ENCODE measurements at regions of chr11 and their contacts with region 1.

Region 1: GRCh38 chr11:5123802-5124521 is 14.2 kb downstream of the OR52A5 start:
- DNase-seq: peak; percentile 80
- H3K4me3 ChIP-seq: no peak overlapping the region
- H3K27ac ChIP-seq: no peak overlapping the region
- H3K4me1 ChIP-seq: no peaks in the 10 kb centered on the region
- H3K27me3 ChIP-seq: no peaks in the 10 kb centered on the region
- CTCF ChIP-seq: peak; percentile 75

Region 2: GRCh38 chr11:4626207-4627099 is 497.5 kb before region 1 on chr11:
- CTCF ChIA-PET with region 1: no interaction called
- POLR2A ChIA-PET with region 1: no interaction called
- intact Hi-C with region 1: loop called (anchors 5 kb)
- DNase-seq: peak; percentile 78
- H3K4me3 ChIP-seq: no peak overlapping the region
- H3K27ac ChIP-seq: no peak overlapping the region
- H3K4me1 ChIP-seq: no peaks in the 10 kb centered on the region
- H3K27me3 ChIP-seq: no peaks in the 10 kb centered on the region
- CTCF ChIP-seq: peak; percentile 73

Region 3: GRCh38 chr11:5059391-5059790 is 64.6 kb before region 1 on chr11 and contains the start of gene OR52E2:
- CTCF ChIA-PET with region 1: no interaction called
- POLR2A ChIA-PET with region 1: no interaction called
- intact Hi-C with region 1: no loop called
- DNase-seq: no peak
- H3K4me3 ChIP-seq: no peak within 1 kb of the TSS
- H3K27ac ChIP-seq: no peak within 1 kb of the TSS
- H3K4me1 ChIP-seq: no peaks in the 10 kb centered on the region
- H3K27me3 ChIP-seq: no peaks in the 10 kb centered on the region
- CTCF ChIP-seq: no peak
- total RNA-seq, gene OR52E2: not detected in 2 replicates

Region 4: GRCh38 chr11:5291207-5291838 is 167.4 kb after region 1 on chr11:
- CTCF ChIA-PET with region 1: no interaction called
- POLR2A ChIA-PET with region 1: no interaction called
- intact Hi-C with region 1: loop called (anchors 5 kb)
- DNase-seq: peak; percentile 10
- H3K4me3 ChIP-seq: no peak overlapping the region
- H3K27ac ChIP-seq: no peak overlapping the region
- H3K4me1 ChIP-seq: no peaks in the 10 kb centered on the region
- H3K27me3 ChIP-seq: no peaks in the 10 kb centered on the region
- CTCF ChIP-seq: peak; percentile 43

Region 5: DNA sequence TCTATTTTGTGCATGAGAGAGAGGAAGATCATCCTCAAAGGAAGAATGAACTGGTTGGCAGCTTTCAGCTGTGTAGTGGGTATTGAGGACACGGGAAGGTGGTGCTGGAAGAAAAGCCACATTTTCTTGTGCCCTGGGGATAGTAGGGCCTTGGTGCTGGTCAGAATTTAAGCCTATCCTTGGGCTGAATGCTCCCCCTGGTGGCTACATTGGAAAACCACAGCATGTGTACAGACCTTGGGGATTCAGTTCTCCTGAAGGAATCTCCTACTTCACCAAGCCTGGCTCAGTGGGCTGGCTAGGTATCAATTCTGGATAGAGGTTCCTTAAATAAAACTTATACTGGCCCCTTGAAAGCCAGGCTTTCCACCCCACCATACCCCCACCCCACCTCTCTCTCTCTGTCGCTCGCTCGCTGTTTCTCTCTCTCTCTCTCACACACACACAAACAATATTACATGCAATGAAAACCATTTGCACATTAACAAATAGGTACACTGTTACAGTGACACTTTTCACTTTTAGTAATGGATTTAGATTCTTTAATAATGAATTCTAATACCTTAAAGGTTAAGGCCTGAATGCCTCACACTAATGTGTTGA is 256.9 kb after region 1 on chr11:
- CTCF ChIA-PET with region 1: no interaction called
- POLR2A ChIA-PET with region 1: no interaction called
- intact Hi-C with region 1: loop called (anchors 1 kb)
- DNase-seq: peak; percentile 61
- H3K4me3 ChIP-seq: no peak overlapping the region
- H3K27ac ChIP-seq: no peak overlapping the region
- H3K4me1 ChIP-seq: no peaks in the 10 kb centered on the region
- H3K27me3 ChIP-seq: no peaks in the 10 kb centered on the region
- CTCF ChIP-seq: peak; percentile 70

Region 6: DNA sequence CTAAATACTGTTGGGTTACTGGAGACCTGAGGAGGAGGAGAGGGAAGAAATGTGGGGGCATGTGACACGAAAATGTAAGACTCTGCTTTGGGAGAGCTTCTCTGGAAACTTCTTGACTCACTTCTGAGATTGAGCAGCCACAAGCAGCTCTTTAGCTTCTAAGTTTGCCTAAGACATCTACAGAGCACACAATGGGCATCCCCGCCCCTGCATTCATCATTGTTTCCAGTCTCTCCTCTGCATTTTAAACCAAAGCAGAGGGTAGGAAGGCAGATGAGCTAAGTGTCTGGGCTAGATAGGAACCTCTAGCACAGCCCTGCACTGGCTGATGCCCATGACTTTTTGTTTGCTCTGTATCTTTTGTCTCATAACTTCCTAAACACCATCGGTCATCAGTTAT is 362.5 kb after region 1 on chr11:
- CTCF ChIA-PET with region 1: no interaction called
- POLR2A ChIA-PET with region 1: no interaction called
- intact Hi-C with region 1: no loop called
- DNase-seq: no peak
- H3K4me3 ChIP-seq: no peak overlapping the region
- H3K27ac ChIP-seq: no peak overlapping the region
- H3K4me1 ChIP-seq: no peaks in the 10 kb centered on the region
- H3K27me3 ChIP-seq: no peaks in the 10 kb centered on the region
- CTCF ChIP-seq: no peak

Region 7: DNA sequence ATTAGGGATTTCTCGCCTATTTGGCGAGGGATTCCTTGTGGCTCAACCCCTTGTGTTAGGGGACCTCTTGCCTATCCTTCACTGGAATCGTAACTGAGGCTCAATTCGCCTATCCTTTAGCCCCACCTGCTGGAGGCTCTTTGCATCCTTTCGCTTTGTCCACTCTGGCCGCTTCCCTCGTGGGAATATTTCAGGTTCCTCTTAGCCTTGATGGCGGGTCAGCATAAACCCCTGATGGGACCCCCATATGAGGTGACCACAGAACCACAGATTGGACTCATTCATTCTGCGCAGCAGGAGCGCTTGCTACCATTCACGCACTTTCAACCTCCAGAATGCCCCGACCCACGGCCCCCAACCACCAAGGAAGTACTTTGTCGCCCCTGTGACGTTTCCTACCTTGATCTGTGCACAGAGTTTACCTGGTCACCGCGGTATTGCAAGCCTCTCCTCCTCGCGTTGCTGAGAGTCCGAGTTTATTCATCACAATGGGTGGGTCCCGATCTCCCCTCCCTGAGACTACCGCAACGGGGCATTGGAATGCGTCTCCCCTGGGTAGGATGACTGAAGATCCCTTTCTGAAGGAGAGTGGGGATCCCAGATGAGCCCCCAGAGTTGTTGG is 684.6 kb after region 1 on chr11 and contains the start of gene OR52N2:
- CTCF ChIA-PET with region 1: no interaction called
- POLR2A ChIA-PET with region 1: no interaction called
- intact Hi-C with region 1: loop called (anchors 2 kb)
- DNase-seq: peak; percentile 73
- H3K4me3 ChIP-seq: peak within 1 kb of the TSS; percentile 44
- H3K27ac ChIP-seq: no peak within 1 kb of the TSS
- H3K4me1 ChIP-seq: no peaks in the 10 kb centered on the region
- H3K27me3 ChIP-seq: peaks cover 8% of the 10 kb centered on the region
- CTCF ChIP-seq: peak; percentile 81
- total RNA-seq, gene OR52N2: not detected in 2 replicates

Region 8: GRCh38 chr11:5891216-5891800 is 767.3 kb after region 1 on chr11:
- CTCF ChIA-PET with region 1: no interaction called
- POLR2A ChIA-PET with region 1: no interaction called
- intact Hi-C with region 1: loop called (anchors 10 kb)
- DNase-seq: peak; percentile 6
- H3K4me3 ChIP-seq: no peak overlapping the region
- H3K27ac ChIP-seq: no peak overlapping the region
- H3K4me1 ChIP-seq: no peaks in the 10 kb centered on the region
- H3K27me3 ChIP-seq: no peaks in the 10 kb centered on the region
- CTCF ChIP-seq: peak; percentile 49